ENCODE measurements at regions of chr3 and their contacts with region 1.

Region 1: GRCh38 chr3:141192345-141192744 is 39.3 kb upstream of the PXYLP1 start:
- DNase-seq: peak; percentile 97 to 99 (median 98)
- ATAC-seq: peak; percentile 99
- H3K4me3 ChIP-seq: no peak overlapping the region
- H3K27ac ChIP-seq: no peak overlapping the region
- H3K4me1 ChIP-seq: no peaks in the 10 kb centered on the region
- H3K27me3 ChIP-seq: no peaks in the 10 kb centered on the region
- CTCF ChIP-seq: peak; percentile 98 to 100 (median 100)
- POLR2A ChIP-seq: no peak

Region 2: GRCh38 chr3:141000027-141000663 is 192.2 kb before region 1 on chr3:
- intact Hi-C with region 1: loop called (anchors 5 kb)
- DNase-seq: peak; percentile 76 to 82 (median 76)
- ATAC-seq: peak; percentile 79
- H3K4me3 ChIP-seq: no peak overlapping the region
- H3K27ac ChIP-seq: no peak overlapping the region
- H3K4me1 ChIP-seq: no peaks in the 10 kb centered on the region
- H3K27me3 ChIP-seq: no peaks in the 10 kb centered on the region
- CTCF ChIP-seq: peak; percentile 56 to 86 (median 78)
- POLR2A ChIP-seq: no peak

Region 3: GRCh38 chr3:141011232-141011996 is 180.9 kb before region 1 on chr3:
- intact Hi-C with region 1: loop called (anchors 5 kb)
- DNase-seq: peak; percentile 80 to 87 (median 83)
- ATAC-seq: peak; percentile 74
- H3K4me3 ChIP-seq: no peak overlapping the region
- H3K27ac ChIP-seq: no peak overlapping the region
- H3K4me1 ChIP-seq: no peaks in the 10 kb centered on the region
- H3K27me3 ChIP-seq: no peaks in the 10 kb centered on the region
- CTCF ChIP-seq: peak; percentile 65 to 85 (median 75)
- POLR2A ChIP-seq: no peak

Region 4: DNA sequence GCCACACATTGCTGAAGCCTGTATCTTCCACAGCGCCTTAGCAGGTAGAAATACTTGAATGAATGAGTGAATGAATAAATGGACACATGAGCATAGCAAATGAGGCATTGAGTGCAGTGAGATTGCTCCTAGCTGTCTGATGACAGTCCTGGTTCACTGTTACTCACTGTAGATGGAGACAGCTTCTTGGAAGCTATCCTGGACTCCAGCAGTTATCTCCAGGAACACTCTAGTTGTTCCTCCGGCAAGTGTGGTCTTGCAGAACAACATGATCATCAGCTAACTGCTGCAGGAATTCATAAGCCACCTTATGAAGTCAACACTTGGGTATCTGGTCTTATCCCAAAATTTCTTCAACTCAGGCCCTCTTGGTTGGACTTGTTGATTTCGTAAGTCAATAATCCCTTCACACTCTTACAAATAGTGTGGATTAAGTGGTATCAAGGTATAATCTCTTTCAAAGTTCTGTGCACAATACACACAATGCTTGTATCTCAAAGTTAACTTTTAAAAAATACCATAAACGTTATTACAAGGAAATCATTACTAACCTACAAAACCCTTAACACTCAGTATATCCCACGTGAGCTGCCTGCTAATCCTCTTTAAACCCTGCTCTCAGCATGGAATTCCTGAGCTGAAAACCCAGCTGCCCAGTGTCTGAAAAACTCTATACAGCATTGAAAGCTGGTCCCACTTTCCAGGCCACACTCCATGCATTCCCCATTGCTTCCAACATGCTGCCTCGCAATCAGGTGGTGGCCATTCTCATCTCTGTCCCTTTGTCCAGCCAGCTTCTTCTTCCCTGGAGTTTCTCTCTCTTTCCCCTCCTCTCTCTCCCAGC is 161.5 kb after region 1 on chr3:
- intact Hi-C with region 1: no loop called
- DNase-seq: no peak
- ATAC-seq: no peak
- H3K4me3 ChIP-seq: no peak overlapping the region
- H3K27ac ChIP-seq: no peak overlapping the region
- H3K4me1 ChIP-seq: no peaks in the 10 kb centered on the region
- H3K27me3 ChIP-seq: no peaks in the 10 kb centered on the region
- CTCF ChIP-seq: no peak
- POLR2A ChIP-seq: no peak